ENCODE measurements at regions of chr17 and their contacts with region 1.

Region 1: GRCh38 chr17:2990396-2990795 is 73.0 kb downstream of the OR1D5 start:
- DNase-seq: no peak
- ATAC-seq: no peak; a peak in 1 of 6 replicates
- H3K4me3 ChIP-seq: no peak overlapping the region
- H3K27ac ChIP-seq: no peak overlapping the region
- H3K4me1 ChIP-seq: no peaks in the 10 kb centered on the region
- CTCF ChIP-seq: no peak
- EP300 ChIP-seq: no peak
- POLR2A ChIP-seq: no peak
- RAD21 ChIP-seq: no peak

Region 2: GRCh38 chr17:2853111-2853721 is 137.2 kb before region 1 on chr17:
- CTCF ChIA-PET with region 1: interaction called, 79 read pairs
- POLR2A ChIA-PET with region 1: interaction called, 4 read pairs
- DNase-seq: peak; percentile 63 to 73
- ATAC-seq: peak; percentile 57 to 72
- H3K4me3 ChIP-seq: peak overlapping the region; percentile 72
- H3K27ac ChIP-seq: peak overlapping the region; percentile 87 to 92
- H3K4me1 ChIP-seq: peaks cover 23% of the 10 kb centered on the region
- CTCF ChIP-seq: no peak
- EP300 ChIP-seq: no peak
- POLR2A ChIP-seq: no peak
- RAD21 ChIP-seq: 0 out of 5 replicates have a peak, but pooled peaks of 1 of the 2 experiments have one; percentile 15

Region 3: GRCh38 chr17:3004133-3004801 is 13.9 kb after region 1 on chr17:
- CTCF ChIA-PET with region 1: interaction called, 11 read pairs
- POLR2A ChIA-PET with region 1: no interaction called
- DNase-seq: peak; percentile 98
- ATAC-seq: peak; percentile 91 to 92
- H3K4me3 ChIP-seq: no peak overlapping the region
- H3K27ac ChIP-seq: peak overlapping the region; percentile 91
- H3K4me1 ChIP-seq: peaks cover 40% of the 10 kb centered on the region
- CTCF ChIP-seq: no peak
- EP300 ChIP-seq: peak; percentile 51 to 77; a peak in 3 of 5 replicates
- POLR2A ChIP-seq: no peak
- RAD21 ChIP-seq: peak; percentile 13 to 46; a peak in 4 of 5 replicates

Region 4: GRCh38 chr17:3038930-3039329 is 48.5 kb after region 1 on chr17:
- CTCF ChIA-PET with region 1: no interaction called
- POLR2A ChIA-PET with region 1: no interaction called
- DNase-seq: no peak
- ATAC-seq: peak in 1 of 2 experiments; percentile 24; a peak in 1 of 6 replicates
- H3K4me3 ChIP-seq: no peak overlapping the region
- H3K27ac ChIP-seq: no peak overlapping the region
- H3K4me1 ChIP-seq: no peaks in the 10 kb centered on the region
- CTCF ChIP-seq: no peak
- EP300 ChIP-seq: no peak
- POLR2A ChIP-seq: no peak
- RAD21 ChIP-seq: no peak

Measured in A549 (cell line).